ENCODE measurements at regions of chr20 and their contacts with region 1.

Region 1: DNA sequence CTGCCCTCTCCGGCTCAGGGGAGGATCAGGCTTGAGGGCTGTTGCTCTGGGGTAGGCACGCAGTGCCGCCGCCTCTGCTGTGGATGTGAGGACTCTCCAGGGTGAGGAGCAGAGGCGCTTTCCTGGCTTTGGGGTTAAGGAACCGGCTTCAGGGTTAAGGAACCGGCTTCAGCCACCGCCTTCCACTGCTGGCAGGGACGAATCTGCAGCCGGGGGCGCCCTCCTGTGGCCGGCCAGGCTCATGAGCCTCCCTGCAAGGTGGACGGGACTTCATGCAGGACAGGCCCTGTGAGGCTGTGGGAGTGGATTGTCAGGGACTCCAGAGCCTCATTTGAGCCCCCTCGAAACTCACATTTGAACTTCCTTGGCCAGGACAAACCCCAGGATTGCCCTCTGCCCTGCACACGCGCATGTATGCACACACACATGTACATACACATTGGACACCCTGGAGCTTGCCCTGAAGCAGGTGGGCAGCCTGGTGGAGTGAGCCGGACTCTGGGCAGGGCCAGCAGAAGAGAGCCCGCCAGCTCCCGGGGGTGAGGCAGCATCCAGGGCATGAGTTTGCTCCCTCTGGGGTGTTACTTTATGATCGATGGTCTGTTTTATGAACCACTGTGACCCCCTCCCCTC is 146.8 kb downstream of the PHACTR3 start:
- DNase-seq: peak; percentile 94

Region 2: GRCh38 chr20:59560588-59561227 is 190.5 kb before region 1 on chr20:
- intact Hi-C with region 1: loop called in 1 of 2 experiments (anchors 10 kb)
- DNase-seq: no peak

Region 3: DNA sequence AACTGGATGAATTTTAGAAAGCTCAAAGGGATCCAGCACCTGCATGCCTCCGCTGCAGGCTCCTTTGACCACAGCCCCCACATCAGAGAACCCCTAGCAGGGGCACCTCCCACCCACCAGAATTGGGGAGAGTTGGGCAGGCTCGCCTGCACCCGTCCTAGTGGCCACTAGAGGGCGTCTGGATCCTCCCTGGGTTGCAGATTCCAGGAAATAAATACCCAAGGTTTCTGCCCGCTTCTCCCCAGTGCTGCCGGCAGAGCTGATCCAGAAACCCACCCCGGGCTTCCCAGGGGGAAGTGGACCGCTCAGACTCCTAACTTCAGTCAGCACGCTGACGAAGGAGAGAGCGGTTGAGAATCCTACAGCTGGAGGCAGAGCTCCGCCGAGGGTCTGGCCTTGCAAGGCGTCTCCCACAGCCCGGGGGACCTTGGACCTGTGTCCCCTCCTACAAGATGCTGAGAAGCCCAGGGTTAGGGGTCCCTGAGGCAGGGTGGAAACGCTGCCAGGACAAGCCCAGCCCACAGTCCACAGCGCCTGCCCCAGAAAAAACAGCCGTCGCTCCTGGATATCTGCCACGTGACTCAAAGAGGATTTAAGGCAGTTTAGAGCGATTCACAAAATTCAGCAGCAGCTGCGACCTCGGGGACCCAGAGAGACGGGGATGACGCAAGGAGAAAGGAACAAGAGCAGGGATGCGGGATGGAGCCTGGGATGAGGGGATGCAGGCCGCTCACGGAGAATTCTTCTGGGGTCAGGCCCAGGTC is 179.4 kb before region 1 on chr20:
- intact Hi-C with region 1: loop called (anchors 2 to 10 kb)
- DNase-seq: peak; percentile 90

Region 4: DNA sequence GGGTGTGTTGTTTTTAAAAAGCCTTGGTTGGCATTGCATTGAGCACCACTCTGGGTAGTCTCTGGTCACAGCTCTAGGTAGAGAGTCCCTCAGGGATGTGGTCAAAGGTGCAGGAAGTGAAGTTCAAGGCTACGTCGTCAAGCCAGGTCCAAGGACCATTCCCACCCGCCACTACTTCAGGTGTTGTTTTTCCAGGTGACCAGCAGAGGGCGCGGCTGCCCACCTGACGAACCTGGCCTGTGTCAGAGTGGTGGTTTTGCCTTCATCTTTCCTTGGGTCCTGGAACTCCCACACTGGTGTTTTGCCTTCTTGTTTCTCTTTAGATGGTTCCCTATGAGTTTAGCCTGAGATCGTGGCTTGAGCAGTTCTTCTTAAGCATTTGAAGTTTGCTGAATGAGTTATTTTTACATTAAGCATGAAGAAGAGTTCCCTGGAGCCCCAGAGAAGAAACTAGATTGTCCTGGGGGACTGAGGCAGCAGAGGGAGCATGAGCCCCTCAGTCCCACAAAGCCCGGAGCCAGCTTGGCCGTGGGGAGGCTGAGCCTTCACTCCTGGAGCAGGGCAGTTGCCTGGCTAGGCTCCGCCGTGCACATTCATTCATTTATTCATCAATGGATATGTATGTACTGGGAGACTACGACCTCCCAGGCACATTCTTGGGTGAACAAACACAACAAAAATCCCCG is 152.4 kb before region 1 on chr20:
- intact Hi-C with region 1: loop called (anchors 2 to 5 kb)
- DNase-seq: peak; percentile 70

Region 5: GRCh38 chr20:60137629-60138245 is 386.6 kb after region 1 on chr20:
- intact Hi-C with region 1: no loop called
- DNase-seq: no peak